Activated CD4-positive, alpha-beta T cell treated with anti-CD3 and anti-CD28 coated beads for 36 hours (primary cell): ENCODE measurements at regions of chr9 and their contacts with region 1.

Region 1: GRCh38 chr9:33225319-33226149 is 14.4 kb upstream of the SPINK4 start:
- DNase-seq: peak; percentile 85
- ATAC-seq: peak; percentile 82
- H3K4me3 Mint-ChIP-seq: no peak overlapping the region
- H3K27ac Mint-ChIP-seq: peak overlapping the region; percentile 38
- H3K4me1 Mint-ChIP-seq: peaks cover 16% of the 10 kb centered on the region
- H3K27me3 Mint-ChIP-seq: no peaks in the 10 kb centered on the region

Region 2: GRCh38 chr9:32579706-32580331 is 645.7 kb before region 1 on chr9:
- CTCF ChIA-PET with region 1: interaction called, 4 read pairs
- POLR2A ChIA-PET with region 1: no interaction called
- intact Hi-C with region 1: loop called in 1 of 2 experiments (anchors 5 kb)
- DNase-seq: peak; percentile 87
- ATAC-seq: no peak
- H3K4me3 Mint-ChIP-seq: no peak overlapping the region
- H3K27ac Mint-ChIP-seq: no peak overlapping the region
- H3K4me1 Mint-ChIP-seq: no peaks in the 10 kb centered on the region
- H3K27me3 Mint-ChIP-seq: peaks cover 8% of the 10 kb centered on the region

Region 3: DNA sequence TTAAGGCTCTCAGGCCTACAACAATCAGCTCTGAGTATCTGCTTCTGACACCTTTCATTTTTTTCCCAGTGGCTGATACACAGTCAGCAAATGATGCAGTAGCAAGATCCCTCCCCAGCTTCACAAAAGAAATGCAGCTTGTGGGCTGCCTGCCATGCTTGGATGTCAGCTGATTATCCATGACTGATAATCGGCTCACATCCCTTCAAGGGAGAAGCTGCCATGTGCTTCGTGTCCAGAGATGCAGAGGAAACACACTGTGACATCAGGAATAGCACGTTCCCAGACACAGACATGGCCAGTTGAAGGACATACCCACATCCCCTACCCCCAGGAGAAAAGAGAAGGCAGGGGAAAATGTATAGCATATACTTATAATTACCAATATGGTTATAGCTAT is 414.3 kb before region 1 on chr9:
- CTCF ChIA-PET with region 1: no interaction called
- POLR2A ChIA-PET with region 1: no interaction called
- intact Hi-C with region 1: loop called in 1 of 2 experiments (anchors 10 kb)
- DNase-seq: no peak
- ATAC-seq: no peak
- H3K4me3 Mint-ChIP-seq: no peak overlapping the region
- H3K27ac Mint-ChIP-seq: no peak overlapping the region
- H3K4me1 Mint-ChIP-seq: no peaks in the 10 kb centered on the region
- H3K27me3 Mint-ChIP-seq: peaks cover 7% of the 10 kb centered on the region

Region 4: GRCh38 chr9:33024966-33025571 is 200.5 kb before region 1 on chr9 and contains the start of gene DNAJA1:
- CTCF ChIA-PET with region 1: no interaction called
- POLR2A ChIA-PET with region 1: interaction called, 3 read pairs
- intact Hi-C with region 1: loop called in 1 of 2 experiments (anchors 5 kb)
- DNase-seq: peak; percentile 97
- ATAC-seq: peak; percentile 82
- H3K4me3 Mint-ChIP-seq: peak within 1 kb of the TSS; percentile 98
- H3K27ac Mint-ChIP-seq: peak within 1 kb of the TSS; percentile 94
- H3K4me1 Mint-ChIP-seq: peaks cover 59% of the 10 kb centered on the region
- H3K27me3 Mint-ChIP-seq: no peaks in the 10 kb centered on the region
- total RNA-seq, gene DNAJA1: 198 to 266 TPM

Region 5: GRCh38 chr9:33209394-33209793 is 16.1 kb before region 1 on chr9:
- CTCF ChIA-PET with region 1: interaction called, 9 read pairs
- POLR2A ChIA-PET with region 1: no interaction called
- intact Hi-C with region 1: loop called in 1 of 2 experiments (anchors 2 kb)
- DNase-seq: no peak
- ATAC-seq: no peak
- H3K4me3 Mint-ChIP-seq: no peak overlapping the region
- H3K27ac Mint-ChIP-seq: peak overlapping the region; percentile 55
- H3K4me1 Mint-ChIP-seq: peaks cover 2% of the 10 kb centered on the region
- H3K27me3 Mint-ChIP-seq: no peaks in the 10 kb centered on the region

Region 6: GRCh38 chr9:33239921-33240320 is 14.4 kb after region 1 on chr9 and contains the start of gene SPINK4:
- CTCF ChIA-PET with region 1: interaction called, 12 read pairs
- POLR2A ChIA-PET with region 1: no interaction called
- intact Hi-C with region 1: no loop called
- DNase-seq: no peak
- ATAC-seq: no peak
- H3K4me3 Mint-ChIP-seq: no peak within 1 kb of the TSS
- H3K27ac Mint-ChIP-seq: no peak within 1 kb of the TSS
- H3K4me1 Mint-ChIP-seq: peaks cover 5% of the 10 kb centered on the region
- H3K27me3 Mint-ChIP-seq: peaks cover 3% of the 10 kb centered on the region
- total RNA-seq, gene SPINK4: not detected

Region 7: DNA sequence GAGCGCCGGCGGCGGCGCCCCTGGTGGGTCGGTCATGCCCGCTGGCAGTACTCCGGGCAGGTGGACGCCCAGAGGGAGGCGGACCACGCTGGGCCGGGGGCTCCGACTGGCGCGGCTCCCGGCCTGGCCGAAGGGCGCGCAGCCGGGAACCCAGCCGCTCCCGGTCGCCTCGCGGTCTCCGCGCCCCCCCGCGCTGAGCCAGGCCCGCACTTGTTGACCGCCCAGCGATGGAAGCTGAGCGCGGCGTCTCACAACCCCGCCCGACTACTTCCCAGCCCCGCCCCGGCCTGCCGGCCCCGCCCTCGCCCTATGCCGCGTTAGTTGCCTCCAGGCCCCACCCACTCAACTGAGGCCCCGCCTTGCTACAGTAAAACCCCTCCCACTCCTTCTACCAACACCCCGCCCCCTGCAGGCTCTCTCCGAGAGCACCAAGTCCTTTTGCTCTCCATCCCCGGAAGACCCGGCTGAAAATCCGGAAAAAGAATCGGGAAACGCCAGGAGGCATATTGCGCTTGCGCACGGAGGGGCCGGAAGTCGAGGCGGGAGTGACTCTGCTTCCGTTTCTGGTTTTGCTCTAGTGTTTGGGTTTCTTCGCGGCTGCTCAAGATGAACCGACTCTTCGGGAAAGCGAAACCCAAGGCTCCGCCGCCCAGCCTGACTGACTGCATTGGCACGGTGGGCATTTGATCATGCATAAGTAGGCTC is 39.1 kb after region 1 on chr9 and contains the starts of genes BAG1 and CHMP5:
- CTCF ChIA-PET with region 1: interaction called, 4 read pairs
- POLR2A ChIA-PET with region 1: no interaction called
- intact Hi-C with region 1: loop called in 1 of 2 experiments (anchors 2 kb)
- DNase-seq: peak; percentile 100
- ATAC-seq: peak; percentile 96
- H3K4me3 Mint-ChIP-seq: peak within 1 kb of the TSS; percentile 97
- H3K27ac Mint-ChIP-seq: peak within 1 kb of the TSS; percentile 99
- H3K4me1 Mint-ChIP-seq: peaks cover 51% of the 10 kb centered on the region
- H3K27me3 Mint-ChIP-seq: no peaks in the 10 kb centered on the region
- total RNA-seq, gene BAG1: 47.9 to 65.8 TPM
- total RNA-seq, gene CHMP5: 102 to 106 TPM

Region 8: GRCh38 chr9:33393581-33393980 is 168.0 kb after region 1 on chr9:
- CTCF ChIA-PET with region 1: no interaction called
- POLR2A ChIA-PET with region 1: no interaction called
- intact Hi-C with region 1: no loop called
- DNase-seq: no peak
- ATAC-seq: no peak
- H3K4me3 Mint-ChIP-seq: no peak overlapping the region
- H3K27ac Mint-ChIP-seq: no peak overlapping the region
- H3K4me1 Mint-ChIP-seq: peaks cover 4% of the 10 kb centered on the region
- H3K27me3 Mint-ChIP-seq: no peaks in the 10 kb centered on the region

Region 9: GRCh38 chr9:34048923-34049697 is 823.6 kb after region 1 on chr9:
- CTCF ChIA-PET with region 1: no interaction called
- POLR2A ChIA-PET with region 1: no interaction called
- intact Hi-C with region 1: no loop called
- DNase-seq: peak; percentile 98
- ATAC-seq: peak; percentile 84
- H3K4me3 Mint-ChIP-seq: peak overlapping the region; percentile 90
- H3K27ac Mint-ChIP-seq: peak overlapping the region; percentile 99
- H3K4me1 Mint-ChIP-seq: peaks cover 38% of the 10 kb centered on the region
- H3K27me3 Mint-ChIP-seq: no peaks in the 10 kb centered on the region